A549 (cell line): ENCODE measurements at regions of chr5 and their contacts with region 1.

Region 1: GRCh38 chr5:32489791-32490582 is 45.4 kb upstream of the ZFR start:
- DNase-seq: peak; percentile 63 to 78
- ATAC-seq: peak; percentile 86 to 92
- H3K4me3 ChIP-seq: no peak overlapping the region
- H3K27ac ChIP-seq: no peak overlapping the region
- H3K4me1 ChIP-seq: no peaks in the 10 kb centered on the region
- CTCF ChIP-seq: peak; percentile 91
- EP300 ChIP-seq: no peak
- POLR2A ChIP-seq: no peak
- RAD21 ChIP-seq: peak; percentile 85 to 86

Region 2: GRCh38 chr5:32465076-32465475 is 24.9 kb before region 1 on chr5:
- CTCF ChIA-PET with region 1: interaction called, 21 read pairs
- POLR2A ChIA-PET with region 1: no interaction called
- DNase-seq: no peak
- ATAC-seq: no peak
- H3K4me3 ChIP-seq: no peak overlapping the region
- H3K27ac ChIP-seq: no peak overlapping the region
- H3K4me1 ChIP-seq: no peaks in the 10 kb centered on the region
- CTCF ChIP-seq: no peak
- EP300 ChIP-seq: no peak
- POLR2A ChIP-seq: no peak
- RAD21 ChIP-seq: no peak

Region 3: GRCh38 chr5:32504989-32505596 is 15.1 kb after region 1 on chr5:
- CTCF ChIA-PET with region 1: interaction called, 57 read pairs
- POLR2A ChIA-PET with region 1: no interaction called
- DNase-seq: no peak
- ATAC-seq: no peak
- H3K4me3 ChIP-seq: no peak overlapping the region
- H3K27ac ChIP-seq: no peak overlapping the region
- H3K4me1 ChIP-seq: no peaks in the 10 kb centered on the region
- CTCF ChIP-seq: no peak
- EP300 ChIP-seq: no peak
- POLR2A ChIP-seq: no peak
- RAD21 ChIP-seq: no peak

Region 4: DNA sequence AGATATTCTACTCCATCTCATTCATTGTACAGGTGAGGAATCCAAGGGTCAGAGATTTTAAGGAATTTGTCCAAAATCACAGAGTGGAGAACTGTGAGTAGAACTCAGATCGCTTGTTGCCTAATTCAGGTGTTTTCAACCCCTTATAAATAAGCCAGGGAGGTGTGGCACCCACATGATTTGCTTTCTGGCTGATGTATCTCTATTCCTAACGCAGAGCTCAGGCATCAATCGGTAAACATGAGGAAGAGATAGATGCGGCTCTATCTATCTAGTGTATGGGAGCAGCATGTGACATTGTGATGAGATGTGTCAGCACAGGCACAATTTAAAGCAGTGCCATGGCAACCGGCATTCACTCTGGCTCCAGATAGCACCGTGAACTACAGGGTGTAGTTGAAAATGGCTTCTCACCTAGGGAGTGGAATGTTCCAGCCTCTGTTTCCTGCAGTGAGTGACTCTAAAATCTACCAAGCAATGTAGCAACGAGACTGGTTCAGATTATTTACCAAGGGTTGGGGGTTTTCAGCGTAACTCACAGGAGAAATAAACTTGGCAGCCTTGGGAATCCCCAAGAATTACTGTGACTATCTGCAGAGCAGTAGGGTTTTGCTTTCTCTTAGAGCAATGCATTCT is 42.0 kb after region 1 on chr5:
- CTCF ChIA-PET with region 1: interaction called, 16 read pairs
- POLR2A ChIA-PET with region 1: interaction called, 6 read pairs
- DNase-seq: peak; percentile 74 to 75
- ATAC-seq: peak; percentile 97 to 99
- H3K4me3 ChIP-seq: peak overlapping the region; percentile 45
- H3K27ac ChIP-seq: peak overlapping the region; percentile 86
- H3K4me1 ChIP-seq: peaks cover 21% of the 10 kb centered on the region
- CTCF ChIP-seq: no peak
- EP300 ChIP-seq: no peak
- POLR2A ChIP-seq: no peak
- RAD21 ChIP-seq: no peak

Region 5: GRCh38 chr5:32572778-32573480 is 82.9 kb after region 1 on chr5:
- CTCF ChIA-PET with region 1: interaction called, 11 read pairs
- POLR2A ChIA-PET with region 1: no interaction called
- DNase-seq: no peak
- ATAC-seq: no peak
- H3K4me3 ChIP-seq: no peak overlapping the region
- H3K27ac ChIP-seq: no peak overlapping the region
- H3K4me1 ChIP-seq: peaks cover 10% of the 10 kb centered on the region; the same call in 2 of the 3 replicates
- CTCF ChIP-seq: no peak
- EP300 ChIP-seq: no peak
- POLR2A ChIP-seq: no peak
- RAD21 ChIP-seq: no peak

Region 6: GRCh38 chr5:32600057-32600622 is 110.2 kb after region 1 on chr5:
- CTCF ChIA-PET with region 1: interaction called, 11 read pairs
- POLR2A ChIA-PET with region 1: no interaction called
- DNase-seq: no peak
- ATAC-seq: peak; percentile 57 to 62; a peak in 4 of 6 replicates
- H3K4me3 ChIP-seq: no peak overlapping the region
- H3K27ac ChIP-seq: no peak overlapping the region
- H3K4me1 ChIP-seq: peaks cover 21% of the 10 kb centered on the region
- CTCF ChIP-seq: no peak
- EP300 ChIP-seq: no peak
- POLR2A ChIP-seq: no peak
- RAD21 ChIP-seq: no peak